ENCODE measurements at regions of chr19 and their contacts with region 1.

Region 1: DNA sequence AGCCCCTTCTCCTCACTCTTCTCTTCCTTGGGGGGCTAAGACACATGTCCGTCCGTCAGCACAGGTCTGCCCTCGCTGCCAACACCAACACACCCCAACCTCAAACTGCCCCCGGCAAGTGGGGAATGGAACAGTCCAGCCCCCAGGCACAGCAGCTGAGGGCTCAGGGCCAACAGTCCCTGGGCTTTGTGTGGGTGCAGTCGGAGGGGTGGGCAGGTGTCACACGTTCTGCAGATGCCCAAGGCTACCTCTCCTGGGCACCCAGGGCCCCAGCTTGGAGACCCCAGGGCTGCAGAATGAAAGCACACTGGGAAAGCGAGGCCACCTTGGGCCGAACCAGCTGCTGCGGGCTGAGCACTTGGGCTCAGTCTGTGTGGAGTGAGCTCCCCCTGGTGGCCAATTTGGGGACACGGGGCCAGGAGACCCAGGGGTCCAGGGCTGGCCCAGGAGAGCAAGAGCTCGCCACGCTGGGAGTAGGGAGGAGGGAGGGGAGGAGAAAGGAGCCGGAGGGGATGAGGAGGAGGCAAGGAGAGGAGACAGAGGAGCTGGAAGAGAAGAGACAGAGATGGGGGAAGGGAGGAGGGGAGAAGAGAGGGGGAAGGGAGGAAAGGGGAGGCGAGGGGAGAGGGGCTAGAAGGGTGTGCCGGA is 14.0 kb upstream of the ATP8B3 start:
- DNase-seq: peak; percentile 86
- ATAC-seq: peak; percentile 90
- H3K4me3 Mint-ChIP-seq: no peak overlapping the region
- H3K27ac Mint-ChIP-seq: no peak overlapping the region
- H3K4me1 Mint-ChIP-seq: no peaks in the 10 kb centered on the region
- H3K27me3 Mint-ChIP-seq: no peaks in the 10 kb centered on the region

Region 2: GRCh38 chr19:1789261-1790041 is 36.6 kb before region 1 on chr19:
- CTCF ChIA-PET with region 1: interaction called, 8 read pairs
- POLR2A ChIA-PET with region 1: no interaction called
- intact Hi-C with region 1: loop called in 1 of 2 experiments (anchors 2 kb)
- DNase-seq: no peak
- ATAC-seq: no peak
- H3K4me3 Mint-ChIP-seq: no peak overlapping the region
- H3K27ac Mint-ChIP-seq: no peak overlapping the region
- H3K4me1 Mint-ChIP-seq: peaks cover 3% of the 10 kb centered on the region
- H3K27me3 Mint-ChIP-seq: peaks cover 12% of the 10 kb centered on the region

Region 3: GRCh38 chr19:1837625-1838105 is 11.6 kb after region 1 on chr19:
- CTCF ChIA-PET with region 1: interaction called, 25 read pairs
- POLR2A ChIA-PET with region 1: interaction called, 7 read pairs
- intact Hi-C with region 1: no loop called
- DNase-seq: peak; percentile 80
- ATAC-seq: peak; percentile 68
- H3K4me3 Mint-ChIP-seq: no peak overlapping the region
- H3K27ac Mint-ChIP-seq: no peak overlapping the region
- H3K4me1 Mint-ChIP-seq: peaks cover 23% of the 10 kb centered on the region
- H3K27me3 Mint-ChIP-seq: no peaks in the 10 kb centered on the region

Region 4: GRCh38 chr19:1848399-1849131 is 22.5 kb after region 1 on chr19 and contains the start of gene REXO1:
- CTCF ChIA-PET with region 1: interaction called, 13 read pairs
- POLR2A ChIA-PET with region 1: interaction called, 5 read pairs
- intact Hi-C with region 1: no loop called
- DNase-seq: peak; percentile 98
- ATAC-seq: peak; percentile 72
- H3K4me3 Mint-ChIP-seq: peak within 1 kb of the TSS; percentile 92
- H3K27ac Mint-ChIP-seq: peak within 1 kb of the TSS; percentile 88
- H3K4me1 Mint-ChIP-seq: peaks cover 65% of the 10 kb centered on the region
- H3K27me3 Mint-ChIP-seq: no peaks in the 10 kb centered on the region
- total RNA-seq, gene REXO1: 39.3 to 49.8 TPM

Region 5: GRCh38 chr19:1905071-1905862 is 79.2 kb after region 1 on chr19 and contains the starts of genes ADAT3 and SCAMP4:
- CTCF ChIA-PET with region 1: no interaction called
- POLR2A ChIA-PET with region 1: no interaction called
- intact Hi-C with region 1: no loop called
- DNase-seq: peak; percentile 100
- ATAC-seq: peak; percentile 98
- H3K4me3 Mint-ChIP-seq: peak within 1 kb of the TSS; percentile 84
- H3K27ac Mint-ChIP-seq: peak within 1 kb of the TSS; percentile 82
- H3K4me1 Mint-ChIP-seq: peaks cover 45% of the 10 kb centered on the region
- H3K27me3 Mint-ChIP-seq: no peaks in the 10 kb centered on the region
- total RNA-seq, gene ADAT3: 5.6 to 6.1 TPM
- total RNA-seq, gene SCAMP4: 20.5 to 25.6 TPM